ENCODE measurements at regions of chr2 and their contacts with region 1.

Region 1: GRCh38 chr2:127072970-127073369 is 34.0 kb downstream of the BIN1 start:
- DNase-seq: no peak
- H3K4me3 ChIP-seq: no peak overlapping the region
- H3K27ac ChIP-seq: no peak overlapping the region
- H3K4me1 ChIP-seq: peaks cover 0 to 3% of the 10 kb centered on the region in 2 donors
- H3K27me3 ChIP-seq: no peaks in the 10 kb centered on the region
- CTCF ChIP-seq: no peak
- POLR2A ChIP-seq: no peak

Region 2: GRCh38 chr2:127208313-127208712 is 135.3 kb after region 1 on chr2:
- intact Hi-C with region 1: no loop called
- DNase-seq: no peak
- H3K4me3 ChIP-seq: no peak overlapping the region
- H3K27ac ChIP-seq: no peak overlapping the region
- H3K4me1 ChIP-seq: no peaks in the 10 kb centered on the region
- H3K27me3 ChIP-seq: no peaks in the 10 kb centered on the region
- CTCF ChIP-seq: no peak
- POLR2A ChIP-seq: no peak

Region 3: GRCh38 chr2:127277028-127277427 is 204.1 kb after region 1 on chr2:
- intact Hi-C with region 1: loop called (anchors 10 kb)
- DNase-seq: no peak
- H3K4me3 ChIP-seq: no peak overlapping the region
- H3K27ac ChIP-seq: no peak overlapping the region
- H3K4me1 ChIP-seq: no peaks in the 10 kb centered on the region
- H3K27me3 ChIP-seq: no peaks in the 10 kb centered on the region
- CTCF ChIP-seq: no peak
- POLR2A ChIP-seq: no peak

Measured in thyroid gland (tissue), 4 donors.